ENCODE measurements at regions of chr16 and their contacts with region 1.

Region 1: GRCh38 chr16:78235168-78235800 is 135.8 kb downstream of the WWOX start:
- DNase-seq: no peak
- ATAC-seq: peak; percentile 47

Region 2: GRCh38 chr16:78437352-78437968 is 202.2 kb after region 1 on chr16:
- intact Hi-C with region 1: loop called (anchors 10 kb)
- DNase-seq: no peak
- ATAC-seq: no peak

Measured in Right ventricle myocardium inferior (tissue), 1 donor.